ENCODE measurements at regions of chr9 and their contacts with region 1.

Region 1: DNA sequence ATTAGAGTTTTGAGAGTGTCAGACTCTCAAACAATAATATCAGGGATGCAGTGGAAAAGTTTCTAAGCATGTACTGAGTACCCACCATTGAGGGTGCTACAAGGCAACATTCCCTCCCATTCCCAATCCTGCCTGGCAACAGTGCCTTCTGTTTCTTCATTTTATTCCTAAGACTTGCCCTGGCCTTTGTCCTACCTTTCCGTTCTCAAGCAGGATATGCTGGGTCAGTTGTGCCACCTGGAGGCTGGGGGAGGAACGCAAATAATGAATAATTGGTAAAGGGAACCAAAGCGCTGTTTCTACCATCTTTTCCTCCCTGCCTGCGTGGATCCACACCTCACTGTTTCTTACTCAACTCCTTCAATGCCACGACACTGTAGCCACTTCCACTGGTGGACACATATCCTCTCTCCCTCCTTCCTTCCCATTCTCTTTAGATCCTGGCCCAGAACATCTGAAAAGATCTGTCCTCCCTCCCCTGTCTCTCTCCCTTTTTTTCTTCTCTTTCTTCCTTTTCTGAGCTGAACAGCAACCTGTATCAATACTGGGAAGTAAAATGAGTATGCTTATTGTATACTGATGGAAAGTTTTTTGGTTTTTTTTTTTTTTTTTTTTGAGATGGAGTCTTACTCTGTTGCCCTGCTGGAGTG is 149.5 kb downstream of the C9orf152 start:
- DNase-seq: peak; percentile 67
- ATAC-seq: peak; percentile 96
- H3K4me3 ChIP-seq: no peak overlapping the region
- H3K27ac ChIP-seq: no peak overlapping the region
- H3K4me1 ChIP-seq: peaks cover 6 to 17% of the 10 kb centered on the region in 2 experiments; a peak in 3 of 4 replicates
- H3K27me3 ChIP-seq: no peaks in the 10 kb centered on the region
- CTCF ChIP-seq: peak; percentile 76 to 88 (median 77)
- POLR2A ChIP-seq: no peak
- RAD21 ChIP-seq: peak; percentile 96

Region 2: GRCh38 chr9:109903515-109904138 is 154.8 kb before region 1 on chr9:
- CTCF ChIA-PET with region 1: interaction called, 33 read pairs
- POLR2A ChIA-PET with region 1: interaction called, 5 read pairs
- RAD21 ChIA-PET with region 1: interaction called, 5 to 13 read pairs
- intact Hi-C with region 1: loop called (anchors 1 kb)
- DNase-seq: peak; percentile 76
- ATAC-seq: peak; percentile 93
- H3K4me3 ChIP-seq: no peak overlapping the region
- H3K27ac ChIP-seq: no peak overlapping the region
- H3K4me1 ChIP-seq: no peaks in the 10 kb centered on the region
- H3K27me3 ChIP-seq: no peaks in the 10 kb centered on the region
- CTCF ChIP-seq: peak; percentile 70 to 91 (median 89)
- POLR2A ChIP-seq: no peak
- RAD21 ChIP-seq: peak; percentile 97

Region 3: DNA sequence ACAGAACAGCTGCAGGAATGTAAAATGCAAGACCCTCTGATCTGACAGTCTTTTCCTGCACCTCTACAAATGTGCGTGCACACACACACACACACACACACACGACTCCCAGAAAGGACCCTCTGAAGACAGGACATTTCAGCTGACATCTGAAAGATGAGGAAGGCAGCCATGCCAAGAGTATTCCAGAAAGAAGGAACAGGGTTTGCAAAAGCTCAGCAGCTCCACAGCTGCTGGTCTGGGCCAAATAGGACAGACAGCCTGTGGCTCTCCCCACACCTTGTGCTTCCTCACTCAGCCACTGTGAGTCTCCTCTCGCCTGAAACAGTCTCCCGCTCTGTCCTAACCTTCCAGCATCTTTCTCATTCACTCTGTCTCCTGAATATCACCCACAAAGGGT is 89.4 kb before region 1 on chr9:
- CTCF ChIA-PET with region 1: no interaction called
- POLR2A ChIA-PET with region 1: no interaction called
- RAD21 ChIA-PET with region 1: no interaction called
- intact Hi-C with region 1: loop called (anchors 2 kb)
- DNase-seq: no peak
- ATAC-seq: peak; percentile 88
- H3K4me3 ChIP-seq: no peak overlapping the region
- H3K27ac ChIP-seq: no peak overlapping the region
- H3K4me1 ChIP-seq: no peaks in the 10 kb centered on the region
- H3K27me3 ChIP-seq: 0 out of 2 replicates have a peak, but pooled peaks cover 4% of the 10 kb centered on the region
- CTCF ChIP-seq: peak in 1 of 3 experiments; percentile 30; a peak in 2 of 6 replicates
- POLR2A ChIP-seq: no peak
- RAD21 ChIP-seq: peak; percentile 37; the same call in 1 of the 2 replicates